ENCODE measurements at regions of chr20 and their contacts with region 1.

Region 1: GRCh38 chr20:46215913-46216707 is 92.2 kb downstream of the CDH22 start:
- DNase-seq: peak; percentile 85 to 89
- H3K4me3 ChIP-seq: no peak overlapping the region
- H3K27ac ChIP-seq: no peak overlapping the region
- H3K4me1 ChIP-seq: peaks cover 11% of the 10 kb centered on the region
- H3K27me3 ChIP-seq: peaks cover 48% of the 10 kb centered on the region
- CTCF ChIP-seq: no peak

Region 2: GRCh38 chr20:44785769-44786168 is 1430.3 kb before region 1 on chr20:
- CTCF ChIA-PET with region 1: no interaction called
- POLR2A ChIA-PET with region 1: interaction called, 15 read pairs
- intact Hi-C with region 1: no loop called
- DNase-seq: no peak
- H3K4me3 ChIP-seq: no peak overlapping the region
- H3K27ac ChIP-seq: no peak overlapping the region
- H3K4me1 ChIP-seq: no peaks in the 10 kb centered on the region
- H3K27me3 ChIP-seq: peaks cover 82% of the 10 kb centered on the region
- CTCF ChIP-seq: no peak

Region 3: DNA sequence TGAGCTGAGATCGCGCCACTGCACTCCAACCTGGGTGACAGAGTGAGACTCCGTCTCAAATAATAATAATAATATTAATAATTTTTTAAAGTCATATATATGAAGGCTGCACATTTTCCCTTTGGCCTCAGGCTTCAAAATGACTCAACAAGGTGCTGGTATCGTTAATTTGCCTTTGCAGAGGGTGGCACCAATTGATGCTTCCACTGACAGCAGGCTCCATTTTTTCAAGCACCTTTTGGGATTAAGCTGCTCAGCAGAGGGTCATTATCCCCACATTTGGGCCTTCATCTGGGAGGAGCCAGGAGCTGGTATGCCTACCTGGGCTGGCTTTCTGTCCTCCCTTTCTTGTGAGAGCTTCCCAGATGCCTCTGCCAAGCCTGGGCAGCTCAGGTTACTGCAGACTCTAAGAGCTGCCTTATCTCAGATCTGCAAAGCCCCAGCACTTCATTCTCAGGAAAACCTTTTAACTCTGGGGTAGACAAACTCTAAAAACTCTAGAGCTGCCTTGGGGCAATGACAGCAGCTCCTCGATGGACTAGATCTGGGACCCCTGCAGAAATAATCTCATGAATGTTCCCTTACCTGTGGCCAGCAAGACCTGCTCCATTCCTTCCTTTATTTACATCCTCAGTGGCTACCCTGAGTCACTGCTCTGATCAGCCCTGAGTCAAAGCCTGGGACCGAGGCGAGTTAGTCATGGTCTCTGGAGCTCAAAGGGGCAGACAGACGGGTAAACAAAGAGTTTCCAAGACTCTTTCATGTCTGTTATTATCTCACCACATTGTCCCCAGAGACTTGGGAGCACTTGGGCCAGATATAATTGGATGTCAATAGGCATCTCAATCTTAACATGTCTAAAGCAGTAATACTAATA is 598.5 kb after region 1 on chr20:
- CTCF ChIA-PET with region 1: no interaction called
- POLR2A ChIA-PET with region 1: no interaction called
- intact Hi-C with region 1: no loop called
- DNase-seq: peak; percentile 83 to 97
- H3K4me3 ChIP-seq: peak overlapping the region; percentile 31; the same call in 1 of the 2 replicates
- H3K27ac ChIP-seq: peak overlapping the region; percentile 69
- H3K4me1 ChIP-seq: peaks cover 31% of the 10 kb centered on the region
- H3K27me3 ChIP-seq: no peaks in the 10 kb centered on the region
- CTCF ChIP-seq: no peak

Measured in PC-9 (cell line).